ENCODE measurements at regions of chr15 and their contacts with region 1.

Region 1: DNA sequence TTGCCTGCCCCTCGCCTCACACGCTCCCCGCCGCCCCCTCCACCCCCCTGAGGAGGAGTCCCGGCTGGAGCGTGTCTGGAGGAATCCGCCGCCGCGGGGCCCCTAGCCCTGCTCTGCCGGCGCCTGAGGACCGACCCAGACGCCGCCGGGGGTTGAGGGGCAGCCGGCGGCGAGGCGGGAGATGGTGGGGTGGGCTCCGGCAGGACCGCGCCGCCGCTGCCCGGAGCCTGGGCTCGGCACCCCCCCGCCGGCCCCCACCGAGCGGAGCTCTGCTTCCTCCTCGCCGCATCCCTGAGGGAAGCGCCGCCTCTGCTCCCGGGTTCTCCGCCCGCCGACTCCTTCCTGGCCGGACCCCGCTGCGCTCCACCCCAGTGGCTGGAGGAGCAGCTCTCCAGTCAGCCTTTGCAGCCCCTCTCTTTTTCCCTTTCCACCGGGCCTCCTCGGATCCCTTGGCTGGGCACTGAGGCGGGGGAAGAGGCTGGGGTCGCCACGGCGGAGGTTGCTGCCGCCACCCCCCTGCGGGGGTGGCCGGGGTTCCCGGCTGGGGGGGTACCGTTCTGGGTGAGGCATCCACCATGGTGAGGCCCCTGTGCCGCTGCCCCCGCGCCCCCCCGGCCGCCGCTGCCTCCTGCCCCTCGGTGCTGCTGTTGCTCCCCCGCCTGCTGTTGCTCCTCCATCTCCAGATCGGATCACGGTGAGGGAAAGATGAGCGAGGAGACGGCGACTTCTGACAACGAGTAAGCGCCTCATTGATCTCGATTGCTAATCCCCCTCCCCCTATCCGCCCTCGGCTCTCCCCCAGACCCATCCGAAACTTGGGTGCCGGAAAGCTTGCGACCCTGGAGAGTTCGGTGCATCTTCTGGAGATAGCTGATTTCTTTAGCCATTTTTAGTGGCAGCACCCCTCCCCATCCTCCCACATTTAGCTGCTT is at the start of gene SPRED1:
- DNase-seq: peak; percentile 44
- ATAC-seq: peak; percentile 21
- H3K4me3 Mint-ChIP-seq: peak within 1 kb of the TSS; percentile 80
- H3K27ac Mint-ChIP-seq: peak within 1 kb of the TSS; percentile 58
- H3K4me1 Mint-ChIP-seq: peaks cover 23% of the 10 kb centered on the region
- H3K27me3 Mint-ChIP-seq: peaks cover 33% of the 10 kb centered on the region
- CTCF ChIP-seq: no peak
- total RNA-seq, gene SPRED1: 0.77 to 0.96 TPM

Region 2: DNA sequence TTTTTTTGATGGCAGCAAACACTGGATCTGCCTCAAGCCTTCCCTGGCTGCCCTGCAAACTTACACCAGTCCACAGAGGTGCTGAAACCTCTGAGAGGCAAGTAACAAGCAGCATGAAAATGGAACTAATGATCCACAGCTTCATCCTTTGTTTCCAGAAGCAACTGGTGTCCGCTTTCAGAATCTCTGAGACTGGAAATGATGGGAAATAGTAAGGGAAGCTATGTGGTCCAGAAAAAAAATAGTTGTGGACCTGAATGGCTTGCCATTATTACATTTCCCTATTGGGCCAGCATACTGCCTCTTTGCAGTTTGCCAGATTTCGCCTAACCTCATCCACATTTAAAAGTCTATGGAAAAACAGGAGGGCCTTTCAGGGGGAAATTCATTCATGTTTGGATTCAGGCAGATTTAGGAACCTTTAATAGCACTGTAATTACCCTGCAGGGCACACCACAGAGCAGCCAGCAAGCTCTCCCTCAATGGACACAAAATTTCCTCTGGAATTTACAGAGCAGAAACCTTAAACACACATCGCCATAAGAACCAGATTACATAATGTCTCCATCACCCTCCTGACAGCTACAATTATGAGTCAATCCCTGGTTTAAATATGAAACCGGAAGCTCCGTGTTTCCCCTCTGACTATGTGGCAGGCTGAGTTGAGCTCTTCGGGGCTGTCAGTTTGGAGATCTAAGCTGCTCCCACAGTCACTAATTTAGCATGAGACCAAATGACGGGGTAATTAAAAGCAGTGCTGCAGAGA is 183.9 kb before region 1 on chr15:
- CTCF ChIA-PET with region 1: no interaction called
- POLR2A ChIA-PET with region 1: no interaction called
- intact Hi-C with region 1: loop called (anchors 10 kb)
- DNase-seq: peak; percentile 63
- ATAC-seq: peak; percentile 82
- H3K4me3 Mint-ChIP-seq: no peak overlapping the region
- H3K27ac Mint-ChIP-seq: no peak overlapping the region
- H3K4me1 Mint-ChIP-seq: peaks cover 40% of the 10 kb centered on the region
- H3K27me3 Mint-ChIP-seq: peaks cover 60% of the 10 kb centered on the region
- CTCF ChIP-seq: no peak

Region 3: DNA sequence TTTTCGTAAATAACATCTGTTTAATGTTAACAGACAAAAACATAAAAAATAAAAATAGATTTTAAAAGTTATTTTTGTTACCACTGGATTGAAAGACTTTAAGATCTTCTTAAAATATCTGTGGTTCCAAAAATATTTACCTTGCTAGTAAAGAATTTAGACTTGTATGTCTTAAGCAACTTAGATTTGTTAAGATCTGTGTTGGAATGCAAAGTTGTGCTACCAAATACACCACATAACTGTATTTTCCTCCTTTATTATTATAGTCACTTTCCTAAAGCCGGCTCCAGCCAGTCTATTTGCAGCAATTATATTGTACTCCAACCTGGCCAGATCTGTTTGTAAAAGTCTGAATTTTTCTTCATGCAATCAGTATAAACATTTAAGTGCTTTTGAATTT is 63.6 kb after region 1 on chr15:
- CTCF ChIA-PET with region 1: no interaction called
- POLR2A ChIA-PET with region 1: no interaction called
- intact Hi-C with region 1: loop called (anchors 10 kb)
- DNase-seq: no peak
- ATAC-seq: no peak
- H3K4me3 Mint-ChIP-seq: no peak overlapping the region
- H3K27ac Mint-ChIP-seq: no peak overlapping the region
- H3K4me1 Mint-ChIP-seq: no peaks in the 10 kb centered on the region
- H3K27me3 Mint-ChIP-seq: peaks cover 8% of the 10 kb centered on the region
- CTCF ChIP-seq: no peak

Region 4: GRCh38 chr15:38367476-38367875 is 114.7 kb after region 1 on chr15:
- CTCF ChIA-PET with region 1: no interaction called
- POLR2A ChIA-PET with region 1: no interaction called
- intact Hi-C with region 1: no loop called
- DNase-seq: no peak
- ATAC-seq: no peak
- H3K4me3 Mint-ChIP-seq: no peak overlapping the region
- H3K27ac Mint-ChIP-seq: no peak overlapping the region
- H3K4me1 Mint-ChIP-seq: no peaks in the 10 kb centered on the region
- H3K27me3 Mint-ChIP-seq: peaks cover 18% of the 10 kb centered on the region
- CTCF ChIP-seq: no peak

Measured in activated CD8-positive, alpha-beta T cell treated with anti-CD3 and anti-CD28 coated beads for 36 hours (primary cell).